Heart left ventricle (tissue), 16 donors: ENCODE measurements at regions of chr12 and their contacts with region 1.

Region 1: GRCh38 chr12:69662764-69663163 is 36.3 kb downstream of the BEST3 start:
- DNase-seq: no peak
- ATAC-seq: no peak
- H3K4me3 ChIP-seq: no peak overlapping the region
- H3K27ac ChIP-seq: no peak overlapping the region
- H3K4me1 ChIP-seq: peaks cover 0 to 11% (median 0%) of the 10 kb centered on the region in 12 donors
- H3K27me3 ChIP-seq: no peaks in the 10 kb centered on the region
- CTCF ChIP-seq: no peak
- POLR2A ChIP-seq: no peak

Region 2: GRCh38 chr12:69738351-69739286 is 75.9 kb after region 1 on chr12 and contains the start of gene RAB3IP:
- intact Hi-C with region 1: loop called in 1 of 10 experiments (anchors 10 kb)
- DNase-seq: peak; percentile 87 to 95 (median 91)
- ATAC-seq: peak; percentile 86 to 97 (median 95)
- H3K4me3 ChIP-seq: peak within 1 kb of the TSS; percentile 64 to 99 (median 86)
- H3K27ac ChIP-seq: peak within 1 kb of the TSS in 11 of 12 donors; percentile 55 to 82 (median 78)
- H3K4me1 ChIP-seq: peaks cover 0 to 17% (median 8%) of the 10 kb centered on the region in 12 donors
- H3K27me3 ChIP-seq: no peaks in the 10 kb centered on the region
- CTCF ChIP-seq: peak; percentile 48 to 85 (median 66)
- POLR2A ChIP-seq: peak; percentile 13 to 60
- total RNA-seq, gene RAB3IP: 21.8 to 37.5 (median 32.8) TPM